GM12878 (cell line): ENCODE measurements at regions of chr12 and their contacts with region 1.

Region 1: GRCh38 chr12:45170456-45171042 is 45.3 kb upstream of the ANO6 start:
- DNase-seq: peak; percentile 26
- ATAC-seq: peak; percentile 95
- H3K4me3 ChIP-seq: no peak overlapping the region
- H3K27ac ChIP-seq: no peak overlapping the region
- H3K4me1 ChIP-seq: no peaks in the 10 kb centered on the region
- H3K27me3 ChIP-seq: no peaks in the 10 kb centered on the region
- CTCF ChIP-seq: peak; percentile 89 to 92 (median 90)
- EP300 ChIP-seq: no peak
- POLR2A ChIP-seq: no peak
- RAD21 ChIP-seq: peak; percentile 90

Region 2: DNA sequence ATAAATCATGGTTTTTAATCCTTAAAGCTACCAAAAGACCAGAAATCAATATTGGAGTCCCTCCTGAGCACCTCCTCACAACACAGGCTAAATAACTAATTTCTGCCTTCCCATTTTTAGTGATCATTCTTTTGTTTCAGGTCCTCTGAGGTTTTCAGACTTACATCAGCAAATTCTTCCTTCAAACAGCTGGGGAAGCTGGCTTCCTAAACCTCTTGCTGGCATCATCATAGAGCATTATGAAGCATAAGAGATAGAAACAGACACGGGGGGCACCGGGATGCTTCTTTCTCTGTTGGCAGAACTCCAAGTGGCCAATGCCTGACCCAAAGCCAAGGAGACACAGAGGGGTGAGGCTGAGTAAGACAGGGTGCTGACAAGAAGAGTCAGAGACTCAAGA is 71.8 kb before region 1 on chr12:
- CTCF ChIA-PET with region 1: no interaction called
- POLR2A ChIA-PET with region 1: no interaction called
- RAD21 ChIA-PET with region 1: no interaction called
- SMC1A ChIA-PET with region 1: no interaction called
- in situ Hi-C with region 1: no loop called
- intact Hi-C with region 1: no loop called
- DNase-seq: no peak
- ATAC-seq: no peak
- H3K4me3 ChIP-seq: no peak overlapping the region
- H3K27ac ChIP-seq: no peak overlapping the region
- H3K4me1 ChIP-seq: no peaks in the 10 kb centered on the region
- H3K27me3 ChIP-seq: no peaks in the 10 kb centered on the region
- CTCF ChIP-seq: no peak
- EP300 ChIP-seq: no peak
- POLR2A ChIP-seq: no peak
- RAD21 ChIP-seq: no peak

Region 3: DNA sequence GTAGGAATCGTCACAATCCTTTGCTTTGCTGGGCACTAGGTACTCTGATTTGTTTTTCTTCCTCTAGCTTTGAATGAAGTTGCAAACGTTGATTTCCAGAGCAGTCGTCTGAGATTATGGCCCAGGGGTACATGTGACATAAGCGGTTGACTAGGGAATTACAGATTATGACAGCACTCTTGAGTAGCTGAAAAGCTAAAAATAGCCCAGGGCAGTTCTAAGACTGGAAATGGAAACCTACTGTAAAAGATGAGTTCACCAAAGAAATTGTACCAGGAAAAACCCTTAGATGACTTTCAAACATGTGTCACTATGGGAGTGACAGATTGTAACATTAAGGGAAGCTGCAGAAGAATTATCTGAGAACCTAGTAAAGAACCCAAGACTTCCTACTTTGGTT is 153.8 kb after region 1 on chr12:
- CTCF ChIA-PET with region 1: interaction called, 3 read pairs
- POLR2A ChIA-PET with region 1: no interaction called
- RAD21 ChIA-PET with region 1: no interaction called
- SMC1A ChIA-PET with region 1: no interaction called
- in situ Hi-C with region 1: no loop called
- intact Hi-C with region 1: loop called (anchors 10 kb)
- DNase-seq: no peak
- ATAC-seq: peak; percentile 15; the same call in 2 of the 3 replicates
- H3K4me3 ChIP-seq: no peak overlapping the region
- H3K27ac ChIP-seq: no peak overlapping the region
- H3K4me1 ChIP-seq: no peaks in the 10 kb centered on the region
- H3K27me3 ChIP-seq: no peaks in the 10 kb centered on the region
- CTCF ChIP-seq: no peak
- EP300 ChIP-seq: no peak
- POLR2A ChIP-seq: no peak
- RAD21 ChIP-seq: no peak

Region 4: GRCh38 chr12:45388545-45388944 is 218.0 kb after region 1 on chr12:
- CTCF ChIA-PET with region 1: interaction called, 21 read pairs
- POLR2A ChIA-PET with region 1: no interaction called
- RAD21 ChIA-PET with region 1: interaction called, 14 read pairs
- SMC1A ChIA-PET with region 1: interaction called, 5 read pairs
- in situ Hi-C with region 1: no loop called
- intact Hi-C with region 1: loop called (anchors 1 kb)
- DNase-seq: no peak
- ATAC-seq: no peak; the same call in 2 of the 3 replicates
- H3K4me3 ChIP-seq: no peak overlapping the region
- H3K27ac ChIP-seq: no peak overlapping the region
- H3K4me1 ChIP-seq: no peaks in the 10 kb centered on the region
- H3K27me3 ChIP-seq: no peaks in the 10 kb centered on the region
- CTCF ChIP-seq: peak; percentile 25 to 50 (median 35); a peak in 4 of 6 replicates
- EP300 ChIP-seq: no peak
- POLR2A ChIP-seq: no peak
- RAD21 ChIP-seq: peak; percentile 50

Region 5: GRCh38 chr12:45425426-45425825 is 254.9 kb after region 1 on chr12:
- CTCF ChIA-PET with region 1: no interaction called
- POLR2A ChIA-PET with region 1: no interaction called
- RAD21 ChIA-PET with region 1: no interaction called
- SMC1A ChIA-PET with region 1: interaction called, 4 read pairs
- in situ Hi-C with region 1: no loop called
- intact Hi-C with region 1: loop called (anchors 10 kb)
- DNase-seq: no peak
- ATAC-seq: no peak
- H3K4me3 ChIP-seq: no peak overlapping the region
- H3K27ac ChIP-seq: no peak overlapping the region
- H3K4me1 ChIP-seq: no peaks in the 10 kb centered on the region
- H3K27me3 ChIP-seq: no peaks in the 10 kb centered on the region
- CTCF ChIP-seq: no peak
- EP300 ChIP-seq: no peak
- POLR2A ChIP-seq: no peak
- RAD21 ChIP-seq: no peak